OCI-LY7 (cell line): ENCODE measurements at regions of chr10 and their contacts with region 1.

Region 1: DNA sequence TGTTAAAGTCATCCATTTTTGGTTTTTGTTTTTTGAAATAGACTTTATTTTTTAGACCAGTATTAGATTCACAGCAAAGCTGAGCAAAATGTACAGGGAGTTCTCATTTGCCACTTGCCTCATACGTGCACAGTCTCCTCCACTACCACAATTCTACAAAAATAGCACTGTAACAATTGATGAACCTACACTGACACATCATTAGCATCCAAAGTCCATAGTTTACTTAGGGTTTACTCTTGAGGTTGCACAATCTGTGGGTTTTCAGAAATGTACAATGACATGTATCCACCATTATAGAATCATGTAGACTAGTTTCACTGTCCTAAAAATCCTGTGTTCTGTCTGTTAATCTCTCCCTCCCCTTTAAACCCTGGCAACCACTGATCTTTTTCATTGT is 125.8 kb upstream of the PDSS1 start:
- DNase-seq: no peak
- H3K4me3 ChIP-seq: no peak overlapping the region
- H3K27ac ChIP-seq: no peak overlapping the region
- H3K4me1 ChIP-seq: no peaks in the 10 kb centered on the region
- CTCF ChIP-seq: no peak

Region 2: DNA sequence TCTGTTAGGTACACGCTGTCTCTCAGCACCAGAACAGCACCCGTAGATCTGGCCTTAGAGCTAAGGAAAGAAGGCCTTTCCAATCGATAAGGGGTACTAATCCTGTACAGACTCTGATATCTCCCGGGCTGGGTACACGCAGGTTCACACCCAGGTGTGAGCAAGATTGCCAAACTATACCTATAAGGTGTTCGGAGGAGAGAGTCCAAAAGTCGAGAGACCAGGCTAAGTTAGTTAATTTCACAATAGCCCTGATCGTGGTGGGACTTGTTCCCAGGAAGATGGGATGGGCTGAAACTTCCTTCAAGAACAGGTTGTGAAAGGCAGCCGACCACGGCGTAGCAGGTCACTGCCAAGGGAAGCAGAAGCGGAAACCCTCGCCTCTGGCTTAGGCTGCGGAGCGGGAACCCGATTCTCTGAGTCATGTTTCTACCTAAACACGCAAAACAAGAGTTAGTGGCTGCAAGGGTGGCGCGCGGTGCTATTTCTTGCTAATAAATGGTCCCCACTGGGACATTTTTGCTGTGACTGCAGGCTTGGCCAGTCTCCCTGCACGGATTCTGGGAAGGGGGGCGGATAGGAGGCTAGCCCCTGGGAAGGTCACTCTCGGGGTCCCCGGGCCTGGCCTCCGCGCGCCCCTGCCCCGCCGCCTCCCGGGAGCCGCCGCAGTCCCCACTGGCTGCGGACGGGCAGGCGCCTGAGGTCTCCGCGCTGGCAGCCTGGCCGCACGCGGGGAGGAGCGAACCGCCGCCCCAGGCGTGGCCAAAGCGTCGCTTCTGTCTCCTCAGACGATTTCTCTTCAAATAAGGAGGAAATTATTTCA is 50.4 kb after region 1 on chr10:
- CTCF ChIA-PET with region 1: no interaction called
- POLR2A ChIA-PET with region 1: no interaction called
- intact Hi-C with region 1: loop called (anchors 1 kb)
- DNase-seq: no peak
- H3K4me3 ChIP-seq: no peak overlapping the region
- H3K27ac ChIP-seq: no peak overlapping the region
- H3K4me1 ChIP-seq: no peaks in the 10 kb centered on the region
- CTCF ChIP-seq: no peak

Region 3: GRCh38 chr10:26647602-26648244 is 76.1 kb after region 1 on chr10:
- CTCF ChIA-PET with region 1: no interaction called
- POLR2A ChIA-PET with region 1: no interaction called
- intact Hi-C with region 1: no loop called
- DNase-seq: no peak
- H3K4me3 ChIP-seq: no peak overlapping the region
- H3K27ac ChIP-seq: no peak overlapping the region
- H3K4me1 ChIP-seq: no peaks in the 10 kb centered on the region
- CTCF ChIP-seq: no peak